Activated naive CD8-positive, alpha-beta T cell treated with anti-CD3 and anti-CD28 coated beads, Interleukin-2, amount 10 ng/mL, durations not matched to agents 7 days and 5 days (primary cell): ENCODE measurements at regions of chr5 and their contacts with region 1.

Region 1: GRCh38 chr5:95835682-95836385 is 13.3 kb upstream of the GLRX start:
- DNase-seq: no peak
- ATAC-seq: no peak
- H3K4me3 Mint-ChIP-seq: peak overlapping the region; percentile 85
- H3K27ac Mint-ChIP-seq: peak overlapping the region; percentile 91
- H3K4me1 Mint-ChIP-seq: peaks cover 43% of the 10 kb centered on the region
- H3K27me3 Mint-ChIP-seq: no peaks in the 10 kb centered on the region

Region 2: GRCh38 chr5:95808686-95809413 is 27.0 kb before region 1 on chr5:
- POLR2A ChIA-PET with region 1: interaction called, 24 read pairs
- DNase-seq: peak; percentile 70
- ATAC-seq: peak; percentile 100
- H3K4me3 Mint-ChIP-seq: peak overlapping the region; percentile 78
- H3K27ac Mint-ChIP-seq: peak overlapping the region; percentile 92
- H3K4me1 Mint-ChIP-seq: peaks cover 54% of the 10 kb centered on the region
- H3K27me3 Mint-ChIP-seq: no peaks in the 10 kb centered on the region

Region 3: DNA sequence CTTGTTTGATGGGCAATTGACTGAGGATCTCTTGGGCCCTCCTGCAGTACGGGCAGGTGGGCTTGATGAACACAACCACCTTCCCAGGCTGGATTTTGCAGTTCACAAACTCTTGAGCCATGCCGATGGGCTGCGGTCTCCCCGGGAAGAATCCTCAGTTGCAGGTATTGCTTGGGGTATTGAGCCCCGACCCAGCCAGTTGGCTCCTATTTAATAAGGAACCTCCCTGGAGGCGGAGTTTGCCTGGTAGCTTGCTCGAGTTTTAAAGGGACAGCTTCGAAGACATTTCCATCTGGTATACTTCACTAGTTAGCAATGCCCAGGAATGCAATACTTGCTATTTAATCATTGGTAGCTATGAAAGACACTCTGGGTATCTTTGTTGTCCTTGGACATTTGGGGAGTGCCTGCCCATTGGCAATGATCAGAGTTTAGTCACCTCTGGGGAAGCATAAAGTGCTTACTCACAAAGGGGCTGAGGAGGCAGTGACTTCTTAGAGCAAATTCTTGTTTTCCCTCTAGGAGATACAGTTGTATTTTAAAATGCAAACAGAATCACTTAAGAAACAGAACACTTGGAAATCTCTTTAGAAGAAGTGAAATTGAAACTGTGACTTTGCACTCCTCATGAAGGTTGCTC is 13.2 kb before region 1 on chr5 and contains the start of gene GLRX:
- POLR2A ChIA-PET with region 1: interaction called, 61 read pairs
- DNase-seq: peak; percentile 63
- ATAC-seq: peak; percentile 32
- H3K4me3 Mint-ChIP-seq: peak within 1 kb of the TSS; percentile 98
- H3K27ac Mint-ChIP-seq: peak within 1 kb of the TSS; percentile 93
- H3K4me1 Mint-ChIP-seq: peaks cover 62% of the 10 kb centered on the region
- H3K27me3 Mint-ChIP-seq: no peaks in the 10 kb centered on the region
- total RNA-seq, gene GLRX: 70.6 to 72.9 TPM

Region 4: DNA sequence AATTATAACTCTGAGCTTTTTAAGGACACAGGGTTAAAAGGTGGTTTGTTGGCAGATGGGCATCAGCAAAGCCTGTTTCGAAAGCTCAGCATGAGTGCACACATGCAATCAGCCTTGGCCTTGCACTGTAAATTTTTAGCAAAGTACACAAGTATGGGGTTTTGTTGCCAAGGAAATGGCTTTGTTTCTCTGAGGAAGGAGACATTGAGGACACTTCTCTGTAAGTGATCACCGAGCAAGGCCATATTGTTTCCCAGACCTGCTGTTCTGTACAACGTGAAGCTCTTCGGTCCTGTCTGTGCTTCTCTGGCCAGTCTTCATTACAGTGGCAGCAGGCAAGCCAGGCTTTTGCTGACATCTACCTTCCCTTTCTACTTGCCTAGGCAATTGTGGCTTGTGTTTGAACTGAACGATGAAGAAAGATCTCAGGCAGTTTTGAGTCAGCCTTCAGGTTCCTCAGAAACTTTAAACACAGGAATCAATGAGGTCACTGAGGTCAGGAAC is 14.6 kb after region 1 on chr5:
- POLR2A ChIA-PET with region 1: no interaction called
- DNase-seq: no peak
- ATAC-seq: no peak
- H3K4me3 Mint-ChIP-seq: no peak overlapping the region
- H3K27ac Mint-ChIP-seq: no peak overlapping the region
- H3K4me1 Mint-ChIP-seq: peaks cover 6% of the 10 kb centered on the region
- H3K27me3 Mint-ChIP-seq: peaks cover 10% of the 10 kb centered on the region